ENCODE measurements at regions of chr6 and their contacts with region 1.

Region 1: GRCh38 chr6:150334790-150335783 is 33.7 kb upstream of the IYD start:
- DNase-seq: no peak
- ATAC-seq: peak; percentile 52 to 73
- H3K4me3 ChIP-seq: no peak overlapping the region
- H3K27ac ChIP-seq: no peak overlapping the region
- H3K4me1 ChIP-seq: no peaks in the 10 kb centered on the region
- H3K27me3 ChIP-seq: no peaks in the 10 kb centered on the region
- CTCF ChIP-seq: peak; percentile 86

Region 2: DNA sequence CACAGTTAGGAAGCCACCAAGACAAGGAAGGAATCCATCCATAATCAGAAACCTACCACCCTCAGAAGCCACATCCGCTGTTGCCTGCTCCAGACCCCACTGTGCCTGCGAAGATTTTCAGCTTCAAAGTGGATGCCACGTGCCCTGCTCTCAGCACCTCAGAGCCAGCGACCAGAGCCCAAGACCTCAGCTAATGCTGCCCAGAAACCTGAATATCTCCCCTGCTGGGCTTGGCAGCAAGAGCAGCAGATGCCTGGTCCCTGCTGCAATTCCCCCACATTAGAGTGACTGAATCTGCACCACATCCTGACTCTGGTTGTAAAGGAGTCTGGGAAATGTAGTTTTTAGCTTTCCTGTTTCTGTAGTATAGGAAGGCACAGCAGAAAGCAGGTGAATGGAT is 255.5 kb before region 1 on chr6:
- intact Hi-C with region 1: loop called (anchors 10 kb)
- DNase-seq: no peak
- ATAC-seq: no peak
- H3K4me3 ChIP-seq: no peak overlapping the region
- H3K27ac ChIP-seq: no peak overlapping the region
- H3K4me1 ChIP-seq: no peaks in the 10 kb centered on the region
- H3K27me3 ChIP-seq: peaks cover 4% of the 10 kb centered on the region
- CTCF ChIP-seq: no peak

Region 3: DNA sequence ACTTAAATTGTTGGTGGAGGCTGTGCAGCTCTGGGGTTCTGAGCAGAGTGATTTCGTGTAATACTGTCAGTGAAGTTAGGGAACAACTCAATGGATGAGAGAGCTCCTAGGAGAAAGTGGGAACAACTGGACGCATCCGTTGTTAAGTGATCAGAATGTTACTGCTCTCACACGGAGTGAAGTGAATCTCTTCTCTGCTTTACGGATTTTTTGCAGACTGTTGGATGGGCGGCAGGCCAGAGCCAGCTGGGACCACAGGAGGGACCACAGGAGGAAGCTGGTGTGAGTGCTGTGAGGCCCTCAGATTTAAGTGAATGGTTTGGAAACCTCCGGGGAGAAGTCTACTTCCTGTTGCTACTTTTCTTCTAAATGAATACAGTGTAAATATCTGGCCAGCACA is 215.9 kb before region 1 on chr6:
- intact Hi-C with region 1: no loop called
- DNase-seq: no peak
- ATAC-seq: peak; percentile 7 to 22
- H3K4me3 ChIP-seq: no peak overlapping the region
- H3K27ac ChIP-seq: peak overlapping the region; percentile 18
- H3K4me1 ChIP-seq: peaks cover 11% of the 10 kb centered on the region
- H3K27me3 ChIP-seq: no peaks in the 10 kb centered on the region
- CTCF ChIP-seq: no peak

Region 4: DNA sequence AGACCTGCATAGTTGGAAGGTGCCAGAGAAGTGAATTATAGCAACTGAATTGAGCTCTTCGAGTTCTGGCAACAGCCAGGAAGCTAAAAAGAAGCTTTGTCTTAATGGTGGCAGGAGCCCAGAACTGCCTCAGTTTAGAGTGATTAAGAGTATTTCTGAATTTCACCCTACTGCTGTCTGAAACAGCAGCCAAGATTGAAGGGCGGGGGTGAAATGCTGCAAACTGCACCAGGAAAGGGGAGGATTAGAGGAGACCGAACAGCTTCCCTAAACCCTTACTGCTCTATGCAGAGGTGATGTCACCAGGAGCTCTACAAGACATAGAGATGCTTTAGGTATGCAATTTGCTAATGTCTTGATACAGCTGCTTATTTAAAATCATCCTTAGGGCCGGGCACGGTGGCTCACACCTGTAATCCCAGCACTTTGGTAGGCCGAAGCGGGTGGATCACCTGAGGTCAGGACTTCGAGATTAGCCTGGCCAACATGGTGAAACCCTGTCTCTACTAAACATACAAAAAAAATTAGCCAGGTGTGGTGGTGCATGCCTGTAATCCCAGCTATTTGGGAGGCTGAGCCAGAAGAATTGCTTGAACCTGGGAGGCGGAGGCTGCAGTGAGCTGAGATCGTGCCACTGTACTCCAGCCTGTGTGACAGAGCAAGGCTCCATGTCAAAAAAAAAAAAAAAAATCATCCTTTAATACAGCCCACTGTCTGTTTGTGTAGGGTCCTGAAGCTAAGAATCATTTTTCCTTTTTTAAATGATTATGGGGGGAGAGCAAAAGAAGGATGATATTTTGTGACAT is 57.9 kb before region 1 on chr6:
- intact Hi-C with region 1: no loop called
- DNase-seq: no peak
- ATAC-seq: no peak
- H3K4me3 ChIP-seq: no peak overlapping the region
- H3K27ac ChIP-seq: no peak overlapping the region
- H3K4me1 ChIP-seq: no peaks in the 10 kb centered on the region
- H3K27me3 ChIP-seq: no peaks in the 10 kb centered on the region
- CTCF ChIP-seq: no peak

Region 5: DNA sequence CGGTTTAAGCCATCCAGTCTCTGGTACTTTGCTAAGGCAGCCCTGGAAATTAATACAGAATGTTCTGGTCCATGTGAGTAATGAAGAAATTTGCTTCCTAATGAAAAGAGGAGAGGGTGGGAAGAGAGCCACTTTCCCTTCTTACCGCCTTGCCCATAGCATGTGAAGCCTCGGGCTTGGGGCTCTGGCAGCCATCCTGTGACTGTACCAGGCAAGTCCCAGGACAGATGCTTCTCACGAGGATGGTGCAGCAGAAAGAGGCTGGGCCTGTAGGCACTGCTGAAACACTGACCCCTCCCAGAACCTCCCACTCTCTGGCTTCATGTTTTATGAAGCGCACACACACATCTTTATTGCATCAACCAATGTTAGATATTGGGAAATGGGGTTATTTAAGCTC is 108.5 kb after region 1 on chr6:
- intact Hi-C with region 1: no loop called
- DNase-seq: no peak
- ATAC-seq: no peak
- H3K4me3 ChIP-seq: no peak overlapping the region
- H3K27ac ChIP-seq: no peak overlapping the region
- H3K4me1 ChIP-seq: no peaks in the 10 kb centered on the region
- H3K27me3 ChIP-seq: no peaks in the 10 kb centered on the region
- CTCF ChIP-seq: no peak

Measured in lower lobe of right lung (tissue), 2 donors.